Pancreas (tissue), 10 donors: ENCODE measurements at regions of chr18 and their contacts with region 1.

Region 1: GRCh38 chr18:23812546-23813440 is 123.5 kb downstream of the LAMA3 start:
- DNase-seq: no peak
- ATAC-seq: peak in 3 of 4 donors; percentile 36 to 64 (median 49)
- H3K4me3 ChIP-seq: no peak overlapping the region
- H3K27ac ChIP-seq: no peak overlapping the region
- H3K4me1 ChIP-seq: no peaks in the 10 kb centered on the region
- H3K27me3 ChIP-seq: no peaks in the 10 kb centered on the region
- CTCF ChIP-seq: peak in 3 of 4 donors; percentile 13 to 33 (median 25)

Region 2: GRCh38 chr18:23623040-23623439 is 189.8 kb before region 1 on chr18:
- intact Hi-C with region 1: loop called in 1 of 3 experiments (anchors 5 kb)
- DNase-seq: no peak
- ATAC-seq: no peak
- H3K4me3 ChIP-seq: no peak overlapping the region
- H3K27ac ChIP-seq: no peak overlapping the region
- H3K4me1 ChIP-seq: peaks cover 0 to 8% (median 5%) of the 10 kb centered on the region in 3 donors
- H3K27me3 ChIP-seq: no peaks in the 10 kb centered on the region
- CTCF ChIP-seq: no peak

Region 3: GRCh38 chr18:23703057-23703986 is 109.5 kb before region 1 on chr18:
- intact Hi-C with region 1: no loop called
- DNase-seq: no peak
- ATAC-seq: peak; percentile 83 to 91 (median 88)
- H3K4me3 ChIP-seq: no peak overlapping the region
- H3K27ac ChIP-seq: no peak overlapping the region
- H3K4me1 ChIP-seq: no peaks in the 10 kb centered on the region
- H3K27me3 ChIP-seq: no peaks in the 10 kb centered on the region
- CTCF ChIP-seq: no peak

Region 4: DNA sequence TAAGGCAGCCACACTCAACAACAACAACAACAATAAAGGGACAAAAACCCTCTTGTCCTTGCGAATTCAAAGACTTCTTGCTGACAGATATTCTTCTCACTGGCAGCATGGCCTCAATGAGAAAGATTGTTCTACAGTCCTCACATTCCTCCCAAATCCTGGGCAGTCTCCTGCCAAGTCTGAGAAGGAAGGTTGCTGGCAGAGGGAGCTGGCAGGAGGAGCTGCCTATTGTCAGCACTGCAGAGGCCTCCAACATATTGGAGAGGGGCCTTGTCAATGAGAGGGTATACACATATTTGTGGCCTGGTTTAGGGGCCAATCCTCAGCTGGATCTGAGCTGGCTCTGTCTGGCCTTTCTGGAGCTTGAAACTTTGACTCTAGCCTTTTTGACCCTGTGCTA is 60.0 kb before region 1 on chr18:
- intact Hi-C with region 1: loop called in 1 of 3 experiments (anchors 10 kb)
- DNase-seq: no peak
- ATAC-seq: no peak
- H3K4me3 ChIP-seq: no peak overlapping the region
- H3K27ac ChIP-seq: no peak overlapping the region
- H3K4me1 ChIP-seq: no peaks in the 10 kb centered on the region
- H3K27me3 ChIP-seq: no peaks in the 10 kb centered on the region
- CTCF ChIP-seq: no peak

Region 5: GRCh38 chr18:23918401-23919032 is 105.7 kb after region 1 on chr18:
- intact Hi-C with region 1: loop called in 1 of 3 experiments (anchors 10 kb)
- DNase-seq: peak; percentile 35 to 89 (median 66)
- ATAC-seq: peak in 3 of 4 donors; percentile 82 to 88 (median 87)
- H3K4me3 ChIP-seq: no peak overlapping the region
- H3K27ac ChIP-seq: no peak overlapping the region
- H3K4me1 ChIP-seq: no peaks in the 10 kb centered on the region
- H3K27me3 ChIP-seq: no peaks in the 10 kb centered on the region
- CTCF ChIP-seq: peak; percentile 77 to 84 (median 81)